PC-3 (cell line): ENCODE measurements at regions of chr12 and their contacts with region 1.

Region 1: GRCh38 chr12:101909646-101910045 is 32.3 kb downstream of the DRAM1 start:
- DNase-seq: no peak
- ATAC-seq: no peak
- H3K4me3 ChIP-seq: peak overlapping the region; percentile 15; the same call in 1 of the 2 replicates
- H3K27ac ChIP-seq: no peak overlapping the region
- H3K4me1 ChIP-seq: peaks cover 21% of the 10 kb centered on the region
- H3K27me3 ChIP-seq: no peaks in the 10 kb centered on the region
- CTCF ChIP-seq: no peak

Region 2: GRCh38 chr12:101616027-101616494 is 293.6 kb before region 1 on chr12:
- CTCF ChIA-PET with region 1: no interaction called
- POLR2A ChIA-PET with region 1: no interaction called
- intact Hi-C with region 1: no loop called
- DNase-seq: peak; percentile 22
- ATAC-seq: no peak
- H3K4me3 ChIP-seq: no peak overlapping the region
- H3K27ac ChIP-seq: no peak overlapping the region
- H3K4me1 ChIP-seq: no peaks in the 10 kb centered on the region
- H3K27me3 ChIP-seq: peaks cover 28% of the 10 kb centered on the region; the same call in 1 of the 2 replicates
- CTCF ChIP-seq: no peak

Region 3: DNA sequence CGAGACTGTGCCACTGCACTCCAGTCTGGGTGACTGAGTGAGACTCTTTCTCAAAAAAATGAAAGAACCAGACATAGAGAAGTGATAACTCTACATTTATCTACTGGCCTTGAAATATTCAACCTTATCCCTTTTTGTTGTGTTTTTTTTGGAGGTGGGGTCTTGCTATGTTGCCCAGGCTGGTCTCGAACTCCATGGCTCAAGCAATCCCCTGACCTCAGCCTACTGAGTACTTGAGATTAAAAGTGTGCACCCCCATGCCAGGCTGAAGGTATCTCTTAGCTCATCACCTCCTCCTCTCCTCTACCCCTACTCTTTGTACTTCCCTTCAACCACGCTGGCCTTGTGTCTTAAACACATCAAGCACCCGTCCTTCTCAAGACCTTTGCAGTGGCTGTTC is 28.4 kb before region 1 on chr12:
- CTCF ChIA-PET with region 1: no interaction called
- POLR2A ChIA-PET with region 1: no interaction called
- intact Hi-C with region 1: no loop called
- DNase-seq: no peak
- ATAC-seq: no peak
- H3K4me3 ChIP-seq: no peak overlapping the region
- H3K27ac ChIP-seq: no peak overlapping the region
- H3K4me1 ChIP-seq: peaks cover 12% of the 10 kb centered on the region
- H3K27me3 ChIP-seq: no peaks in the 10 kb centered on the region
- CTCF ChIP-seq: no peak

Region 4: GRCh38 chr12:101891462-101892273 is 18.0 kb before region 1 on chr12:
- CTCF ChIA-PET with region 1: no interaction called
- POLR2A ChIA-PET with region 1: no interaction called
- intact Hi-C with region 1: loop called (anchors 2 kb)
- DNase-seq: peak; percentile 69
- ATAC-seq: peak; percentile 67
- H3K4me3 ChIP-seq: peak overlapping the region; percentile 36; the same call in 1 of the 2 replicates
- H3K27ac ChIP-seq: peak overlapping the region; percentile 24
- H3K4me1 ChIP-seq: peaks cover 44% of the 10 kb centered on the region
- H3K27me3 ChIP-seq: no peaks in the 10 kb centered on the region
- CTCF ChIP-seq: no peak

Region 5: DNA sequence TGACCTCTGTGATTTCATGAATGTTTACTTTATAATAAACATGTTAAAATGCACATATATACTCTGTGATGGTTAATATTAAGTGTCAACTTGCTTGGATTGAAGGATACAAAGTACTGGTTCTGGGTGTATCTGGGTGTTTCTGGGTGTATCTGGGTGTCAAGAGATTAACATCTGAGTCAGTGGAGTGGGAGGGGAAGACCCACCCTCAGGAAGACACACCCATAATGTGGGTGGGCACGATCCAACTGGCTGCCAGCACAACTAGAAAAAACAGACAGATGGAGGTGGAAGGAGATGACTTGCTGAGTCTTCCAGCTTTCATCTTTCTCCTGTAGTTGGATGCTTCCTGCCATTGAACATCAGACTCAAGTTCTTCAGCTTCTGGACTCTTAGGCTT is 198.3 kb after region 1 on chr12:
- CTCF ChIA-PET with region 1: interaction called, 17 read pairs
- POLR2A ChIA-PET with region 1: no interaction called
- intact Hi-C with region 1: no loop called
- DNase-seq: no peak
- ATAC-seq: no peak
- H3K4me3 ChIP-seq: no peak overlapping the region
- H3K27ac ChIP-seq: no peak overlapping the region
- H3K4me1 ChIP-seq: no peaks in the 10 kb centered on the region
- H3K27me3 ChIP-seq: no peaks in the 10 kb centered on the region
- CTCF ChIP-seq: no peak